ENCODE measurements at regions of chr2 and their contacts with region 1.

Region 1: DNA sequence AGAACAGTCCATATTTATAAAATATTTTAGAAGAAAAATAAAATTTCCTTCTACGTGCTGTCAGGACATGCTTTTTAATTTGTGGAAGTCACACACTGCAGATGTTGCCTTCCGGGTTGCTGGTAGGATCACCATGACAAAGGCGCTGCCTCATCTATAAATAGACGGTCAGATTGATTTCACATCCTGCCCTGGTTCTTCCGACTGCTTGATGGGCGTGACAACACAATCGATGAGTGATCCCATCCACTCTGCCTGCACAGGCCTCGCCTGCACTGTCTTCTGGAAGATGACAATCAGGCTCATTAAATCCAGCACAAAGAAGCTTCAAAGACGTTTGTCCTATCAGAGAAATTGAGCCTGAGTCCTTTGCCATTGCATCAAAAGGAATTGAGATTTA is 318.9 kb upstream of the TRIB2 start:
- DNase-seq: no peak
- H3K4me3 ChIP-seq: no peak overlapping the region
- H3K27ac ChIP-seq: no peak overlapping the region
- H3K4me1 ChIP-seq: no peaks in the 10 kb centered on the region
- H3K27me3 ChIP-seq: no peaks in the 10 kb centered on the region
- CTCF ChIP-seq: no peak
- EP300 ChIP-seq: no peak
- POLR2A ChIP-seq: no peak

Region 2: DNA sequence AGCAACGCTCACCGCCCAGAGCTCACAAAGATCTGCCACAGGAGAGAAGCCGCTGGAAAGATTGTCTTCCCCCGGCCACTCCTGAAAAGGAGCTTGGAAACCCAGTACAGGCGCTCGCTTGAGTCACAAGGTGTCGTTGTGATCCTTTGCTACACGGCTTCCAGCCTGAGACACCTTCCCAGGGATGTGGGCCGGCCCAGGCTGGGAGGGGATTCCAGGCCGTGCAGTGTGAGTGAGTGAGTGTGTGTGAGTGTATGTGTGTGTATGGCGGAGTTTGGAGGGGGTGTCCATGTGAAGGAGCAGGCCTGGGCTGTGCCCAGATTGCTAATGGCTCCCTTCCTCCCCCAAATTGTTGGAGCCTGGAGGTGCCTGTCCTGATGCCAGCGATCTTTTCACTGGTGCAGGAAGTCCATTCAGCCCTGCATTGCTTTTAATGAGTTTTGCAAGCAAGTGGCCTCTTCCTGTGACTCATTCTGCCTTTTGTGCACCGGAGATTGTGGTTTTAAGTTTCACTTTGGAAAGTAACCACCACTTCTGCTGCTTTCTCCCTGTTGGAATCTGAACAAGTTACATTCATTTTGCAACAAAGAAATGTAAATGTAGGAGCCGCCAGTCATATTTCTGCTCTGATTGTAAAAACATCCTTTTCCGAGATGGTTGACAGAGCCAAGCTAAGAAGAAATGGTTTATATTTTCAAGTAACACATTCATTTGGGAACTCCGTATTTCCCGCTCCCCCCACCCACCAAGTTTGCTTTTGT is 567.7 kb before region 1 on chr2:
- in situ Hi-C with region 1: loop called in 1 of 4 experiments (anchors 25 kb)
- intact Hi-C with region 1: no loop called
- DNase-seq: peak; percentile 50
- H3K4me3 ChIP-seq: peak overlapping the region in 2 of 4 donors; percentile 3 to 22
- H3K27ac ChIP-seq: peak overlapping the region; percentile 50 to 79 (median 72)
- H3K4me1 ChIP-seq: peaks cover 8 to 23% (median 20%) of the 10 kb centered on the region in 4 donors
- H3K27me3 ChIP-seq: no peaks in the 10 kb centered on the region
- CTCF ChIP-seq: peak in 2 of 5 experiments; percentile 9 to 10
- EP300 ChIP-seq: no peak
- POLR2A ChIP-seq: no peak

Region 3: DNA sequence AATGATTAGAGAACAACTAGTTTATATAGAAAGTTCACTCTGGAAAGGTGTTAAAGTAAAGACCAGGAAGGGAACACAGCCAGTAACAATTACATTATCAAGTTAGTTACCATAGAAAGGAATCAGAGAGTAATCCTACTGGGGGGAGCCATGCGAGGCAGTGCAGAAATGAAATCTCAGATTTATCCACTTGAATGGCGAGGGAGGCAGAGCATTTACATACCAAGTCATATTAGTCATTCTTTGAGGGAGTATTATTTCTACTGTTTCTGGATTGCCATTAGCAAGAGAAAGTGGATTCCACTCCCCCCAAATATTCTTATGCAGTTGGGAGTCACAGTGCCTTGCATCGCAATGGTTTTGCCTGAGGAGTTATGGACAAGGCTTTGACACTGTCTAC is 153.8 kb before region 1 on chr2:
- in situ Hi-C with region 1: no loop called
- intact Hi-C with region 1: no loop called
- DNase-seq: no peak
- H3K4me3 ChIP-seq: no peak overlapping the region
- H3K27ac ChIP-seq: no peak overlapping the region
- H3K4me1 ChIP-seq: no peaks in the 10 kb centered on the region
- H3K27me3 ChIP-seq: no peaks in the 10 kb centered on the region
- CTCF ChIP-seq: no peak
- EP300 ChIP-seq: no peak
- POLR2A ChIP-seq: no peak

Measured in transverse colon (tissue), 4 donors.